ENCODE measurements at regions of chr16 and their contacts with region 1.

Region 1: GRCh38 chr16:49855280-49855821 is 561 bp downstream of the ZNF423 start:
- DNase-seq: peak; percentile 90 to 96 (median 96)
- ATAC-seq: peak; percentile 78 to 82
- H3K4me3 ChIP-seq: peak overlapping the region; percentile 96
- H3K27ac ChIP-seq: peak overlapping the region; percentile 97
- H3K4me1 ChIP-seq: no peaks in the 10 kb centered on the region
- H3K27me3 ChIP-seq: no peaks in the 10 kb centered on the region

Region 2: DNA sequence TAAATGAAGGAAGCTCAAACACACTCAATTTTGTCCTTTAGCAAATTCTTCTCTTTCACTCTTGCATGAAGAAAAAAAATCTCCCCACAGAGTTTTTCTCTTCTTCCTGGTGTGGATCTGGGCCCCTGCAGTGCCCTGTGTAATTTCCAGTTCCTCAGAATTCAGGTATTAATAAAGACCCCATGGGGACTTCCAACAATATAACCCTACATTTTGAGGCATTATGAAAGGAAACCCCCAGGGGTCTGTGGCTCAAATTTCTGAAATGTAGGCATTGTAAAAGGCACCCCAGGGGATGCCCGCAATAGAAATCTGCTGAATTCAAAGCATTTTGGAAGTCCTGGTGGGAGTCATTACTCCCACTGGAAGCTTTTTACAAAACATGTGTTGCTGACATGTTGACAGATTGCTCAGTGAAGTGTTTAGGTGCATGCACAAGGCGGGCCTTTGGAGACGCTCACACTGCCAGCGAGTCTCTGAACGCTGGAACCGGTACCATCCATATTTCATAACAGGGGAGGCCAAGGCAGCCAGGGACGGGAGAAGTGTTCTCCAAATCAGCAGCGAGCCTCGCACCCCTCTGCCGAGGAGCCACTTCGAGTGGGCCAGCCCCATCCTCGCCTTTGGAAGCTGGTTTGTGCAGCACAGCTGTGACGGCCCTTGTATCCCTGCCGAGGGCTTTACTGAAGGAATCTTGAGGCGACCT is 153.4 kb before region 1 on chr16:
- intact Hi-C with region 1: loop called in 1 of 4 experiments (anchors 5 kb)
- DNase-seq: peak; percentile 87 to 95 (median 92)
- ATAC-seq: peak; percentile 58 to 73
- H3K4me3 ChIP-seq: no peak overlapping the region
- H3K27ac ChIP-seq: no peak overlapping the region
- H3K4me1 ChIP-seq: peaks cover 4% of the 10 kb centered on the region
- H3K27me3 ChIP-seq: no peaks in the 10 kb centered on the region

Region 3: GRCh38 chr16:49755313-49755620 is 100.1 kb before region 1 on chr16:
- intact Hi-C with region 1: loop called in 2 of 4 experiments (anchors 5 to 10 kb)
- DNase-seq: no peak
- ATAC-seq: peak; percentile 65 to 67
- H3K4me3 ChIP-seq: peak overlapping the region; percentile 49
- H3K27ac ChIP-seq: no peak overlapping the region
- H3K4me1 ChIP-seq: peaks cover 2% of the 10 kb centered on the region
- H3K27me3 ChIP-seq: no peaks in the 10 kb centered on the region

Region 4: GRCh38 chr16:49776085-49776595 is 79.2 kb before region 1 on chr16:
- intact Hi-C with region 1: loop called in 2 of 4 experiments (anchors 5 to 10 kb)
- DNase-seq: peak; percentile 69 to 86 (median 81)
- ATAC-seq: peak; percentile 81 to 87
- H3K4me3 ChIP-seq: no peak overlapping the region
- H3K27ac ChIP-seq: peak overlapping the region; percentile 65
- H3K4me1 ChIP-seq: peaks cover 19% of the 10 kb centered on the region
- H3K27me3 ChIP-seq: no peaks in the 10 kb centered on the region

Region 5: DNA sequence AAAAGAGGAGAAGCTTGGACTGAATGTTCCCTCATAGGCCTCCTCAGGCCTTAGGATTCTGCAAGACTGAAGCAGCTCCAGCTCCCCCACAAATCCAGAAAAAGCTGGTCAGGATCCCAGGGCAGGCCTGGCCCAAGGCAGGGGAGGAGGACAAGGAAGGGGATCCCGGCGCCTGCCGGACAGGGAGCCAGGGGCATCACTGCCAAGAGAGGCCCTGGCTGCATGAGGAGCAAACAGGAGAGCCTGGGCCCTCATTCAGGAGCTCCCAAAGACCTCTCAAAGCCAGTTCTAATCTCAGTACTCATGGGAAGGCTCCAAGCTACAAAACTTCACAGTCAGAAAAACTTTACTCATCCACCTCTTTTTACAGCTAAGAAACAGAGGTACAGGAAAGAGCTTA is 66.8 kb before region 1 on chr16:
- intact Hi-C with region 1: loop called in 1 of 4 experiments (anchors 10 kb)
- DNase-seq: peak; percentile 76 to 90 (median 90)
- ATAC-seq: peak; percentile 73 to 90
- H3K4me3 ChIP-seq: no peak overlapping the region
- H3K27ac ChIP-seq: peak overlapping the region; percentile 70
- H3K4me1 ChIP-seq: no peaks in the 10 kb centered on the region
- H3K27me3 ChIP-seq: no peaks in the 10 kb centered on the region